OCI-LY7 (cell line): ENCODE measurements at regions of chr9 and their contacts with region 1.

Region 1: GRCh38 chr9:35732122-35732799 is at the starts of genes CREB3 and TLN1:
- DNase-seq: peak; percentile 99
- H3K4me3 ChIP-seq: peak within 1 kb of the TSS; percentile 89
- H3K27ac ChIP-seq: peak within 1 kb of the TSS; percentile 77
- H3K4me1 ChIP-seq: peaks cover 56% of the 10 kb centered on the region
- CTCF ChIP-seq: peak; percentile 65
- total RNA-seq, gene CREB3: 16.8 and 18.2 TPM in 2 replicates
- total RNA-seq, gene TLN1: 87.5 and 98.8 TPM in 2 replicates

Region 2: GRCh38 chr9:35603987-35604577 is 128.2 kb before region 1 on chr9:
- CTCF ChIA-PET with region 1: interaction called, 3 read pairs
- POLR2A ChIA-PET with region 1: no interaction called
- intact Hi-C with region 1: loop called (anchors 1 kb)
- DNase-seq: peak; percentile 100
- H3K4me3 ChIP-seq: peak overlapping the region; percentile 90
- H3K27ac ChIP-seq: peak overlapping the region; percentile 79
- H3K4me1 ChIP-seq: peaks cover 26% of the 10 kb centered on the region
- CTCF ChIP-seq: peak; percentile 90

Region 3: GRCh38 chr9:35657546-35658136 is 74.6 kb before region 1 on chr9 and contains the start of gene RMRP:
- CTCF ChIA-PET with region 1: interaction called, 5 read pairs
- POLR2A ChIA-PET with region 1: interaction called, 6 read pairs
- intact Hi-C with region 1: loop called (anchors 2 kb)
- DNase-seq: peak; percentile 96
- H3K4me3 ChIP-seq: peak within 1 kb of the TSS; percentile 81
- H3K27ac ChIP-seq: peak within 1 kb of the TSS; percentile 84
- H3K4me1 ChIP-seq: peaks cover 64% of the 10 kb centered on the region
- CTCF ChIP-seq: 0 out of 2 replicates have a peak, but pooled peaks have one; percentile 27
- total RNA-seq, gene RMRP: 21,739 and 26,575 TPM in 2 replicates

Region 4: DNA sequence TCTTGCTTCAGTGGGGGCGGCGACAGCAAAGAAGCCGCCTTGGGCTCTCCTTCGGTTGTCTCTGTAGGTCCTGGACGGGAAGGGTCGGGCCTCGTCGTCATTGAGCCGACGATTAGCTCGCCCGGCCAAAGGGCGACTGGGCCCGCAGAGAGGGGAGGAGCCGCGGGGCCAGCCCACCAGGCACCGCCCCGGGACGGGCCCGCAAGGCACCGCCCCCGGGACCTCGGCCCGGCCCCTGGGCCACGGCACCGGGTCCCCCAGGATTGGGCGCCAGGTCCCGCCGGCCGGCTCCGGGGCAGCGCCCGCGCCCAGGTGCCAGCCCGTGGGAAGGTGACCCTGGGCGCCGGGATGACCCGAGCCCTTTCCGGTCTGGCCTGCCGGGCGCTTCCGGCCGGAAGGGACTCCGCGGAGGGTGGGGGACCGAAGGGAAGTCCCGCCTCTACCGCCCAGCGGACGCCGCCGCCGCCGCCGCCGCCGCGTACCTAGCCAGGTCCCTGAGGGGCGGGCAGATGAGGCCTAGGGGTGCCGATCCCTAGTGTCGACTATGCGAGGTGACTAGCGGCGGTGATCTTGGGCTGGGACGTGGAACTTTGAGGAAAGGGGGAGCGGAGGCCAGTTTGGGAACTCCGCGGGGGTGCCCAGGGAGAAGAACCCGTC is 16.7 kb after region 1 on chr9 and contains the starts of genes GBA2 and RGP1:
- CTCF ChIA-PET with region 1: interaction called, 8 read pairs
- POLR2A ChIA-PET with region 1: interaction called, 38 read pairs
- intact Hi-C with region 1: loop called (anchors 1 kb)
- DNase-seq: peak; percentile 79
- H3K4me3 ChIP-seq: peak within 1 kb of the TSS; percentile 89
- H3K27ac ChIP-seq: peak within 1 kb of the TSS; percentile 51
- H3K4me1 ChIP-seq: peaks cover 51% of the 10 kb centered on the region
- CTCF ChIP-seq: no peak
- total RNA-seq, gene GBA2: 66.0 and 75.4 TPM in 2 replicates
- total RNA-seq, gene RGP1: 12.3 and 13.5 TPM in 2 replicates

Region 5: DNA sequence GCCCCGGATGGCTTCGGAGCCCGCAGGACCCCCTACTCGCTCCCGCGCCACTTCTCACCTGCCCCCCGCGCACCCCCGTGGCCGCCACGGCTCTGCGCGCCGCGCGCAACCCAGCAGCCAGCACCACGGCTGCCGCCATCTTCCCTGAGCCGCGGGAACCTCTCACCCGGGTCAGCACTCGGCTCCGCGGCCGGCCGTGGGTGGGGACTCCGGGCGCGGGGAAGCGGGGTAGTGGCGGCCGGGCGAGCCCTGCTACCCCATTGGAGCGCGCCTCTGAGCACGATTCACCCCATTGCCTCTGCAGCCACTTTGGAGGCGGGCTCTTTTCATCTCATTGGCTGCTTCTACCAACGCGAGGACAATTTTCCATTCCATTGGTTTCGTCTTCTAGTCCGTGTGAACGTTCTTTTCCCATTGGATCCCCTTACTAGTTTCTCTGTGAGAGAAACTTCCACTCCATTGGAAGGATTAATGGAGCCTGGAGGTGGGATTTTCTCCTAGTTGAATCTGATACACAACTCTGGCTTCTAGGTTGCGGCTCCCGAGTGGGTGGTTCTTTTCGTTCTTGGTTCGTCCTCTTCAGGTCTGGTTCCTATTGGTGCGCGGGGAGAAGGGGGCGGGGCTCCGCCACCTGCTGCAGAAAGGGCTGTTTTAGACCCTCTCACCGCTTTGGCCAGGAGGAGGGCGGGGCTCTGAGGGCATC is 82.7 kb after region 1 on chr9 and contains the start of gene HINT2:
- CTCF ChIA-PET with region 1: no interaction called
- POLR2A ChIA-PET with region 1: interaction called, 5 read pairs
- intact Hi-C with region 1: loop called (anchors 1 kb)
- DNase-seq: peak; percentile 98
- H3K4me3 ChIP-seq: peak within 1 kb of the TSS; percentile 93
- H3K27ac ChIP-seq: peak within 1 kb of the TSS; percentile 82
- H3K4me1 ChIP-seq: peaks cover 29% of the 10 kb centered on the region
- CTCF ChIP-seq: no peak
- total RNA-seq, gene HINT2: 74.3 and 82.5 TPM in 2 replicates

Region 6: GRCh38 chr9:35903049-35903448 is 170.8 kb after region 1 on chr9:
- CTCF ChIA-PET with region 1: no interaction called
- POLR2A ChIA-PET with region 1: no interaction called
- intact Hi-C with region 1: no loop called
- DNase-seq: peak; percentile 76
- H3K4me3 ChIP-seq: no peak overlapping the region
- H3K27ac ChIP-seq: no peak overlapping the region
- H3K4me1 ChIP-seq: peaks cover 22% of the 10 kb centered on the region
- CTCF ChIP-seq: peak; percentile 94